ENCODE measurements at regions of chr1 and their contacts with region 1.

Region 1: DNA sequence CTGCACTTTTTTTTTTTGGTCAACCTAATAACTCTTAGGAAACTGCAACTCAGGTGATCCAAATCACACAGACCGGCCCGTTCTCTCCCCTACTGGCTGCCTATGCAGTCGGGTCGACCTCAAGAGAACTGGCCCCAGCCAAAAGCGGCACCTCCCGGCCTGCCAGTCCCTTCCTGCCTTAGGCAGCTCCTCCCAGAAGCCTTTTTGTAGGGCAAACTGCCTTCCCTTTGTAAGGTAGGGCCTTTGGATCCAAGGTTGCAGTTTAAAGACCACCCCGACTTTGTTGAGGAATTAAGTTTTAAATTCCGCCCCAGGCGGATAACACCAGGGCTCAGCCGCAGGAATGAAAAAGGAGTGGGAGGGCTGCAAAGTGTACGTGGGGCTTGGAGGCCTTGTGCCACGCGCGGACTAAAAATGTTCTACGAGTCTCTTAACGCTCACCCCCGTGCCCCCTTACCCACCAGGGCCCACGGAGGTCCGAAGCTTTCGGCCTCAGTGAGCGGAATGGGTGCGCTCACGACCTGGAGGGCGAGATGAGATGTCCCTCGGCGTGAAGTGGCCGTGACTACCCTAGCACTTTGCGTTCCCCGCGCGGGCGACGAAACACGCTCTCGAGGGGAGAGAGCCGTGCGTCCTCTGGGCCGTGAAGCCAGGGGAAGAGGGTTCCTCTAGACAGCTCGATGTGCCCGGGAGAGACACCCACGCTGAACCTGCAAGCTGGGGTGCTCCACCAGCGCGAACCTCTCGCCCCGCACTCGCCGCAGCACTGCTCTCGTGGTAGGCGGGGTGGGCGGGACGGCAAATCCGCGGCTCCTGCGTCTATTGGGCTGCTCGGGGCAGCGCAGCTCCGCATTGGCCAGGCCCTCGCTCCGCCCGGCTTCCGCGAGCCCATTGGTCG is 489 bp upstream of the ST3GAL3 start:
- DNase-seq: peak; percentile 92
- ATAC-seq: peak; percentile 96
- H3K4me3 ChIP-seq: peak overlapping the region; percentile 54 to 81 (median 73)
- H3K4me3 Mint-ChIP-seq: peak overlapping the region; percentile 91
- H3K27ac ChIP-seq: peak overlapping the region; percentile 17 to 18
- H3K27ac Mint-ChIP-seq: peak overlapping the region; percentile 78
- H3K4me1 ChIP-seq: peaks cover 10 to 17% of the 10 kb centered on the region in 2 donors
- H3K4me1 Mint-ChIP-seq: peaks cover 29% of the 10 kb centered on the region
- H3K27me3 ChIP-seq: no peaks in the 10 kb centered on the region
- H3K27me3 Mint-ChIP-seq: no peaks in the 10 kb centered on the region
- CTCF ChIP-seq: no peak

Region 2: GRCh38 chr1:43565600-43566360 is 141.1 kb before region 1 on chr1:
- CTCF ChIA-PET with region 1: no interaction called
- POLR2A ChIA-PET with region 1: no interaction called
- intact Hi-C with region 1: no loop called
- DNase-seq: peak; percentile 24
- ATAC-seq: no peak
- H3K4me3 ChIP-seq: peak overlapping the region in 3 of 5 experiments; percentile 27 to 48 (median 38)
- H3K4me3 Mint-ChIP-seq: peak overlapping the region; percentile 61
- H3K27ac ChIP-seq: no peak overlapping the region
- H3K27ac Mint-ChIP-seq: no peak overlapping the region
- H3K4me1 ChIP-seq: peaks cover 4 to 15% of the 10 kb centered on the region in 2 donors
- H3K4me1 Mint-ChIP-seq: peaks cover 5% of the 10 kb centered on the region
- H3K27me3 ChIP-seq: peaks cover 0 to 20% (median 1%) of the 10 kb centered on the region in 4 experiments
- H3K27me3 Mint-ChIP-seq: peaks cover 28% of the 10 kb centered on the region
- CTCF ChIP-seq: no peak

Region 3: GRCh38 chr1:43650310-43651085 is 56.3 kb before region 1 on chr1:
- CTCF ChIA-PET with region 1: interaction called, 5 read pairs
- POLR2A ChIA-PET with region 1: interaction called, 10 read pairs
- intact Hi-C with region 1: loop called (anchors 2 kb)
- DNase-seq: peak; percentile 97
- ATAC-seq: peak; percentile 77
- H3K4me3 ChIP-seq: peak overlapping the region; percentile 82 to 98 (median 92)
- H3K4me3 Mint-ChIP-seq: peak overlapping the region; percentile 92
- H3K27ac ChIP-seq: peak overlapping the region; percentile 84 to 86
- H3K27ac Mint-ChIP-seq: peak overlapping the region; percentile 94
- H3K4me1 ChIP-seq: peaks cover 23 to 25% of the 10 kb centered on the region in 2 donors
- H3K4me1 Mint-ChIP-seq: peaks cover 45% of the 10 kb centered on the region
- H3K27me3 ChIP-seq: no peaks in the 10 kb centered on the region
- H3K27me3 Mint-ChIP-seq: peaks cover under 1% of the 10 kb centered on the region
- CTCF ChIP-seq: no peak

Region 4: DNA sequence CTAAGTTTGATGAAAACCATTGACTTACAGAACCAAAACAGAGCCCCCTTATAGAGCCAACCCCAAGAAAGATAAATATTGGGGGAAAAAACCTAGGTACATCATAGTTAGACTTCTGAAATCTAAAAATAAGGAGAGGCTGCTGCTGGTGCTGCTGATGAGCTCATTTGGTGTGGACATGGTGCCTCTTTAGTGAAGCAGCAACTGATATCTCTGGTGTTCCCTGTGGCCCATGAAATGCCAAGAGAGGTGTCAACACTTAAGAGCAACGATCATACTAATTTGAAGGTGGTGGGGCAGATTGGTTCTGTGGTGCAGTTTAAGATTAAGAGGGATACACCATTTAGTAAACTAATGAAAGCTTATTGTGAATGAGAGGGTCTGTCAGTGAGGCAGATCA is 36.4 kb after region 1 on chr1:
- CTCF ChIA-PET with region 1: no interaction called
- POLR2A ChIA-PET with region 1: no interaction called
- intact Hi-C with region 1: no loop called
- DNase-seq: no peak
- ATAC-seq: no peak
- H3K4me3 ChIP-seq: no peak overlapping the region
- H3K4me3 Mint-ChIP-seq: no peak overlapping the region
- H3K27ac ChIP-seq: no peak overlapping the region
- H3K27ac Mint-ChIP-seq: no peak overlapping the region
- H3K4me1 ChIP-seq: no peaks in the 10 kb centered on the region
- H3K4me1 Mint-ChIP-seq: peaks cover 3% of the 10 kb centered on the region
- H3K27me3 ChIP-seq: no peaks in the 10 kb centered on the region
- H3K27me3 Mint-ChIP-seq: no peaks in the 10 kb centered on the region
- CTCF ChIP-seq: no peak

Region 5: DNA sequence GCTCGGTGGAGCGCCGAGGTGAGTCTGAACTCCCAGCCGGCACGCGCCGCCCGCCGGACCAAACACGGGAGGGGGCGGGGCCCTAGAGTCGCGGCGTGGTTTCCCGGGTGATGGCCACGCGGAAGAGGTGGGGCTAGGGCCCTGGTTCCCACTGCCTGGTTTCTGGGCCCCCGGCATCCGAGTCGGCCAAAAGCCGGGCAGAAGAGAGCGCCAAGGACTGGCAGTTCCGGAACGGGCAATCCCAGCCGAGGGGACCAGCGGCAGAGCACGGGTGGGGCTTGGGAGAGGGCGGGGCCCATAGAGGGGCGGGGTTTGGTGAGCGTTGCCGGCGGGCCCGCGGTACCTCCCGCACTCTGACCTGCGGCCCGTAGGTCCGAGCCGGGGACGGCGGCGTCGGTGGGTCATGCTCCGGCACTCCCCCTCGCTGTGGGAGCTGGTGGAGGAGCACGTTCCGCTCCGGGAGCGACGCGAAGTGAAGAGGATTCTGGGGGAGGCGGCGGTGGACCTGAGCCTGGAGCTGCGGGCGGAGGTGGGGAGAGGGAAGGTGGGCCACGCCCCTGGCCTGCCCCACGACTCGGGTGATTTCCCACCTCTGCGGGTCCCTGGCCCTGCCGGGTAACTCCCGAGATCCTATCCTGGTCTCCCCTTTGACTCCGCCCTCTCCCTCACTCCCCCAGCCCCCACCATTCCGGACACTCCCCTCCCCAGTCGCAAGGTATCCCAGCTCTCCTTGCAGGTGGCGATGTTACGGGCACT is 284.8 kb after region 1 on chr1 and contains the start of gene CCDC24:
- CTCF ChIA-PET with region 1: no interaction called
- POLR2A ChIA-PET with region 1: no interaction called
- intact Hi-C with region 1: loop called (anchors 5 kb)
- DNase-seq: peak; percentile 84
- ATAC-seq: peak; percentile 89
- H3K4me3 ChIP-seq: peak within 1 kb of the TSS; percentile 11 to 81 (median 72)
- H3K4me3 Mint-ChIP-seq: peak within 1 kb of the TSS; percentile 96
- H3K27ac ChIP-seq: peak within 1 kb of the TSS in 1 of 2 donors; percentile 75
- H3K27ac Mint-ChIP-seq: peak within 1 kb of the TSS; percentile 91
- H3K4me1 ChIP-seq: peaks cover 22 to 44% of the 10 kb centered on the region in 2 donors
- H3K4me1 Mint-ChIP-seq: peaks cover 38% of the 10 kb centered on the region
- H3K27me3 ChIP-seq: no peaks in the 10 kb centered on the region
- H3K27me3 Mint-ChIP-seq: no peaks in the 10 kb centered on the region
- CTCF ChIP-seq: no peak
- total RNA-seq, gene CCDC24: 18.0 and 18.4 TPM in 2 replicates

Measured in B cell (primary cell).